IMR-90 (cell line): ENCODE measurements at regions of chr3 and their contacts with region 1.

Region 1: DNA sequence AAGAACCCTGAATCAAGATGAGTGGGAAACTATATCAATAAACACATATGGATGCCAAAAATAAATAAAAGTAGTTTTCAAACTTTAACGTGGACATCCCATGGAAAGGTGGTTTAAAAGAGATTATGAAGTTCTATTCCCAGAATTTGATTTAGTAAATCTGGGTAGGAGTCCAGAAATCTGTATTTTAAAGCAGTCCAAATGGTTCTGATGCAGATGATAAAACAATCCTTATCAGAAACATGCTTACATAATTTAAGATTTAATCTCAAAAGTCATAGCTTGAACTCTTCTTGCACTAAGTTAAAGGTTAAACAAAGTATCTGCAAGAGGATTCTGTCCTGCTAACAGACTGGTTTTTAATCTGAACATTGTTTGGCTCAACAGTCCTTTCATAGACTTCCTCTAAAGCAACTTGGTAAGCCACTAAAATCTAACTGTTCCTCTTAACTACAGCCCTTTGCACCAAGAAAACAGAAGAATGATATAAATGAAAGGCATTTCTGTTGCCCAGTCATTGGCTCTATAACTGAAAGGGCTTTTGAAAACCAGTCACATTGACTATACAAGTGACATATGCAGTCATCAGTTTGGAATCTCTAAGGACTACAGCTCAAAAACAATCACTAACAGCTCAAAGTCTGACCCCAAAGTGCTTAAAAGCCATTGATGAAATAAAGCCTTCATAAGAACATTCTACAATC is 23.4 kb upstream of the MAP4 start:
- DNase-seq: peak; percentile 84
- ATAC-seq: peak; percentile 77
- H3K4me3 ChIP-seq: no peak overlapping the region
- H3K27ac ChIP-seq: peak overlapping the region; percentile 94
- H3K4me1 ChIP-seq: peaks cover 20% of the 10 kb centered on the region
- H3K27me3 ChIP-seq: no peaks in the 10 kb centered on the region
- CTCF ChIP-seq: no peak
- POLR2A ChIP-seq: no peak
- RAD21 ChIP-seq: no peak

Region 2: GRCh38 chr3:47669026-47669749 is 370.5 kb before region 1 on chr3:
- CTCF ChIA-PET with region 1: no interaction called
- POLR2A ChIA-PET with region 1: no interaction called
- dilution Hi-C with region 1: no loop called
- in situ Hi-C with region 1: no loop called
- intact Hi-C with region 1: no loop called
- DNase-seq: peak; percentile 66
- ATAC-seq: peak; percentile 99
- H3K4me3 ChIP-seq: no peak overlapping the region
- H3K27ac ChIP-seq: no peak overlapping the region
- H3K4me1 ChIP-seq: peaks cover 4% of the 10 kb centered on the region; the same call in 1 of the 2 replicates
- H3K27me3 ChIP-seq: no peaks in the 10 kb centered on the region
- CTCF ChIP-seq: no peak
- POLR2A ChIP-seq: no peak
- RAD21 ChIP-seq: no peak

Region 3: GRCh38 chr3:48013288-48013980 is 26.2 kb before region 1 on chr3:
- CTCF ChIA-PET with region 1: no interaction called
- POLR2A ChIA-PET with region 1: interaction called, 13 read pairs
- dilution Hi-C with region 1: no loop called
- in situ Hi-C with region 1: no loop called
- intact Hi-C with region 1: no loop called
- DNase-seq: peak; percentile 91
- ATAC-seq: peak; percentile 85
- H3K4me3 ChIP-seq: no peak overlapping the region
- H3K27ac ChIP-seq: 0 out of 2 replicates have a peak overlapping the region, but pooled peaks have one; percentile 5
- H3K4me1 ChIP-seq: peaks cover 26% of the 10 kb centered on the region
- H3K27me3 ChIP-seq: no peaks in the 10 kb centered on the region
- CTCF ChIP-seq: no peak
- POLR2A ChIP-seq: no peak
- RAD21 ChIP-seq: no peak

Region 4: DNA sequence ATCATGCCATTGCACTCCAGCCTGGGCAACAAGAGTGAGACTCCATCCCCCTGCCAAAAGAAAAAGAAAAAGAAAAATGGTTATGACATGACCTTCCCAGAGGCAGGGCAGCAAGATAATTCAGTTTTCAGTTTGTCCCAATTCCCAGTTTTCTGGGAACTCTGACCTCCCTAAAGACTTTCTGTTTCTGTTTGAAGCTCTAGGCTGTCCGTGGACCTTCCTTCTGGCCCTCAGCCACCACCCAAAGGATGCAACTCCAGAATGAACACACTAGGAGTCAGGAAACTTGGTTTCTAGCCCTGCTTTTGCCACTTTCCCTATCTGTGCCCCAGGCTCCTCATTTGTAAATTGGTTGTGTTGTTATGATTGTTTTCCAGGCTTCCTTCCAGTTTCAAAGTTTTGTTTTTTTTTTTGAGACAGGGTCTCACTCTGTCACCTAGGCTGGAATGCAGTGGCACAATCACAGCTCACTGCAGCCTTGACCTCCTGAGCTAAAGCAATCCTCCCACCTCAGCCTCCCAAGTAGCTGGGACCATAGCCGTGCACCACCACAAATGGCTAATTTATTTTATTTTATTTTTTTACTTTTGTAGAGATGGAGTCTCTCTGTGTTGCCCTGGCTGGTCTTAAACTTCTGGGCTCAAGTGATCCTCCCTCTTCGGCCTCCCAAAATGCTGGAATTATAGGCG is 80.0 kb after region 1 on chr3:
- CTCF ChIA-PET with region 1: no interaction called
- POLR2A ChIA-PET with region 1: no interaction called
- dilution Hi-C with region 1: no loop called
- in situ Hi-C with region 1: no loop called
- intact Hi-C with region 1: no loop called
- DNase-seq: peak; percentile 55
- ATAC-seq: peak; percentile 85
- H3K4me3 ChIP-seq: no peak overlapping the region
- H3K27ac ChIP-seq: no peak overlapping the region
- H3K4me1 ChIP-seq: no peaks in the 10 kb centered on the region
- H3K27me3 ChIP-seq: no peaks in the 10 kb centered on the region
- CTCF ChIP-seq: no peak
- POLR2A ChIP-seq: no peak
- RAD21 ChIP-seq: no peak